Activated B cell treated with CpG ODN at 0.5 μM for 24 hours (primary cell): ENCODE measurements at regions of chr21 and their contacts with region 1.

Region 1: GRCh38 chr21:36319765-36320420 is at the start of gene MORC3:
- DNase-seq: peak; percentile 98
- ATAC-seq: peak; percentile 88
- H3K4me3 Mint-ChIP-seq: peak within 1 kb of the TSS; percentile 97
- H3K27ac Mint-ChIP-seq: peak within 1 kb of the TSS; percentile 97
- H3K4me1 Mint-ChIP-seq: peaks cover 50% of the 10 kb centered on the region
- H3K27me3 Mint-ChIP-seq: no peaks in the 10 kb centered on the region
- CTCF ChIP-seq: no peak
- total RNA-seq, gene MORC3: 55.4 and 65.6 TPM in 2 replicates

Region 2: DNA sequence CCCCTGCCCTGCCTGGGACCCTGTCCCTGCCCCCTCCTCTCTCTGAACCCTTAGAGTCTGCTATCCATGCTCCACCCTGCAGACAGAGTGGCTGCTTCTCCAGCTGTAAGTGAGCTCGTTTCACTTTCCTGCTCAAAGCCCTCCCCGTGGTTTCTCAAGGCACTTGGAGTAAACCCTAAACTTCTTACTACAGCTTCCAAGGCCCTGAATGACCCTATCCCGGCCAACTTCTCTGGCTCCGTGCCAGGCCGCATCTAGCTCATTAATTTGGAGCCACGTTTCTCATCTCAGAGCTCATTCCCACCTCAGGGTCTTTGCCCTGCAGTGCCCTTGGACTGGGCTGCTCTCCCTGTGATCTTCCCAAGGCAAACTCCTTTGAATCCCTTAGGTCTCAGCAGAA is 1035.7 kb before region 1 on chr21:
- CTCF ChIA-PET with region 1: no interaction called
- POLR2A ChIA-PET with region 1: no interaction called
- intact Hi-C with region 1: no loop called
- DNase-seq: no peak
- ATAC-seq: no peak
- H3K4me3 Mint-ChIP-seq: no peak overlapping the region
- H3K27ac Mint-ChIP-seq: no peak overlapping the region
- H3K4me1 Mint-ChIP-seq: peaks cover 2% of the 10 kb centered on the region
- H3K27me3 Mint-ChIP-seq: peaks cover 4% of the 10 kb centered on the region
- CTCF ChIP-seq: no peak

Region 3: DNA sequence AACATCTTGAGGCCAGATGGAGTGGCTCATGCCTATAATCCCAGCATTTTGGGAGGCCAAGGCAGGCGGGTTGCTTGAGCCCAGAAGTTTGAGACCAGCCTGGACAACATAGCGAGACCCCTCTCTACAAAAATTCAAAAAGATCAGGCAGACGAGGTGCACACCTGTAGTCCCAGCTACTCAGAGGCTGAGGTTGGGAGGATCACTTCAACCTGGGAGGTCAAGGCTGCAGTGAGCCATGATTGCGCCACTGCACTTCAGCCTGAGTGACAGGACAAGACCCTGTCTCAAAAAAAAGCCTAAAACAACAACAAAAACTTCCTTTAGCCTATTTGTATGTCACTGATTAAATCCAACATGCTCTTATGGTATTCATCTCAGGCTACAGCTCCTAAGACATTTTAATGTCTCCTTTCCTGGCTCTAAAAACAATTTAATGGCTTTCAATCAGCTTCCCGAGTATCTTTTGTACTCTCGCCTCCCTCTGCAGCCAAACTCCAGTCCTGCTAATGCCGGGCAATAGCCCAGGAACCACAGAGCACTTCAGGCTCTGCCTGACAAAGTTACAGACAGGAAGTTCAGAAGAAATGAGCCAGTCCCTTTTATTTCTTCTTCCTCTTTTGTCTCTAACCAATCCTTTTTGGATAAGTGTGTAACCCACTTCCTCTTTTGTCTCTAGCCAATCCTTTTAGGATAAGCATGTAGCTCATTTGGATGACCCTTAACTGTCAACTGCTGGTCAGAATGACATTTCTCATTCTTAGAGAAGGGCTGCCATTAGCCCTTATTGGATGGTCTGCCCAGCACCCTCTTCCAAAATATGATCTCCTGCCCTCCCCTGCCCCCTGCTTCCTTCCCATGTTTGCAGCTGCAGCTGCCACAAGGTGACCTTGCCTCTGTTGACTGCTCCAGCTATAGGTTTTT is 169.8 kb before region 1 on chr21:
- CTCF ChIA-PET with region 1: interaction called, 3 read pairs
- POLR2A ChIA-PET with region 1: interaction called, 25 read pairs
- intact Hi-C with region 1: no loop called
- DNase-seq: no peak
- ATAC-seq: peak; percentile 85
- H3K4me3 Mint-ChIP-seq: peak overlapping the region; percentile 55
- H3K27ac Mint-ChIP-seq: peak overlapping the region; percentile 97
- H3K4me1 Mint-ChIP-seq: peaks cover 36% of the 10 kb centered on the region
- H3K27me3 Mint-ChIP-seq: no peaks in the 10 kb centered on the region
- CTCF ChIP-seq: no peak

Region 4: GRCh38 chr21:36288651-36289243 is 31.1 kb before region 1 on chr21:
- CTCF ChIA-PET with region 1: interaction called, 3 read pairs
- POLR2A ChIA-PET with region 1: interaction called, 111 read pairs
- intact Hi-C with region 1: loop called (anchors 1 kb)
- DNase-seq: no peak
- ATAC-seq: peak; percentile 51
- H3K4me3 Mint-ChIP-seq: peak overlapping the region; percentile 62
- H3K27ac Mint-ChIP-seq: peak overlapping the region; percentile 91
- H3K4me1 Mint-ChIP-seq: peaks cover 21% of the 10 kb centered on the region
- H3K27me3 Mint-ChIP-seq: no peaks in the 10 kb centered on the region
- CTCF ChIP-seq: no peak

Region 5: DNA sequence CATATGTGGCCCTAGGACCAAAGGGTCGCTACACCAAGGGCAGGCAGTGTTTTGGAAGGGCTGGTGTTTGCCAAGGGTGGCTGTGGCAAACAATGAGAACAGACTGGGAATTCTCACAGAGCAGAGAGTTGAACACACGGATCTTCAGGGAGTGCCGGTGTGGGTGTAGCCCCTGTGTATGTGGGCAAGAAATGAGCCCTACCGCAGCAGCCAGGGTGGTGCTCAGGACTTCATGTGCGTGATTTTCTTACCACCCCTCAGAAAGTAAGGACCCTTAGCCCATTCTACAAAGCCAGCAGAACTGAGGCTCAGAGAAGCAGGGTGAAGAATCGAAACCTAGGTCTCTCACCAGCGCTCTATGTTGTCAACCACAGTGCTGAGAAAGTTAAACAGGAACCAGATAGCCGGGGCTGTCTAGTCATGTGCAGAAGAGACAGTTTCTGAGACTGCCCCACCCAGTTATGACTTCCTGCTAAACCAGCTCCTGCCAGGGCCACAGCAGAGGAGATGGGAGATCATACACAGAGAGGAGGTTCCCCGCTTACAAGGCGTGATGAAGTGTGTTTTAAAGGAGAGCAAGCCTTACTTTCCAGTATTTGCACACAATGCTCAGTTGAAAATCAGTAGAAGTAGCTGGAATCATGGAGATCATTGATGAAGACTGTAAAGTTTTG is 21.8 kb before region 1 on chr21:
- CTCF ChIA-PET with region 1: interaction called, 21 read pairs
- POLR2A ChIA-PET with region 1: interaction called, 333 read pairs
- intact Hi-C with region 1: loop called (anchors 1 kb)
- DNase-seq: peak; percentile 46
- ATAC-seq: peak; percentile 95
- H3K4me3 Mint-ChIP-seq: peak overlapping the region; percentile 78
- H3K27ac Mint-ChIP-seq: peak overlapping the region; percentile 98
- H3K4me1 Mint-ChIP-seq: peaks cover 61% of the 10 kb centered on the region
- H3K27me3 Mint-ChIP-seq: no peaks in the 10 kb centered on the region
- CTCF ChIP-seq: no peak

Region 6: GRCh38 chr21:36429947-36430546 is 110.2 kb after region 1 on chr21:
- CTCF ChIA-PET with region 1: no interaction called
- POLR2A ChIA-PET with region 1: no interaction called
- intact Hi-C with region 1: no loop called
- DNase-seq: peak; percentile 48
- ATAC-seq: peak; percentile 95
- H3K4me3 Mint-ChIP-seq: peak overlapping the region; percentile 81
- H3K27ac Mint-ChIP-seq: peak overlapping the region; percentile 92
- H3K4me1 Mint-ChIP-seq: peaks cover 18% of the 10 kb centered on the region
- H3K27me3 Mint-ChIP-seq: peaks cover 31% of the 10 kb centered on the region
- CTCF ChIP-seq: no peak